Naive thymus-derived CD4-positive, alpha-beta T cell (primary cell): ENCODE measurements at regions of chr1 and their contacts with region 1.

Region 1: GRCh38 chr1:84690397-84691121 is at the start of gene SSX2IP:
- DNase-seq: peak; percentile 97 to 100 (median 99)
- ATAC-seq: peak; percentile 94
- H3K4me3 ChIP-seq: peak within 1 kb of the TSS; percentile 85
- H3K4me3 Mint-ChIP-seq: peak within 1 kb of the TSS; percentile 85 to 99 (median 92)
- H3K27ac ChIP-seq: peak within 1 kb of the TSS; percentile 82
- H3K27ac Mint-ChIP-seq: peak within 1 kb of the TSS; percentile 92 to 98 (median 96)
- H3K4me1 ChIP-seq: peaks cover 3 to 24% of the 10 kb centered on the region in 2 donors
- H3K4me1 Mint-ChIP-seq: peaks cover 29 to 76% (median 60%) of the 10 kb centered on the region in 7 donors
- H3K27me3 ChIP-seq: no peaks in the 10 kb centered on the region
- H3K27me3 Mint-ChIP-seq: no peaks in the 10 kb centered on the region
- total RNA-seq, gene SSX2IP: 7.5 to 13.4 (median 8.1) TPM

Region 2: DNA sequence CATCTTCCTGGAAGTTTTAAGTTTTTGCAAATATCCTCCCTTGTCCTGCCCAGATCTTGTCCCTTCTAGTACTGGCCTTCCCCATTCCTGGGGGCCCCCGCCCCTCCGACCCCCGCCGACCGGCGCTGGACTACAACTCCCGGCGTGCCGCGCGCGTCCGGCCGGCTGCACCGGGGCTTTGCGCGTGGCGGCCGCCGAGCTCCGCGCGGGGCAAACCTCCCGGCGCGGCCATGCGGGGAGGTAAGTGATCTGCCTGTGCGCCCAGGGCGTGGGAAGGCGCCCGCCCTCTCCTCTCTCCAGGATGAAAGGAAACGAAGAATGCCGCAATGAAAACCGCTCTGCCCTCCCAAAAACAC is 392.3 kb before region 1 on chr1:
- CTCF ChIA-PET with region 1: no interaction called
- POLR2A ChIA-PET with region 1: no interaction called
- intact Hi-C with region 1: loop called in 1 of 2 experiments (anchors 2 kb)
- DNase-seq: peak; percentile 40 to 65 (median 46)
- ATAC-seq: peak; percentile 88
- H3K4me3 ChIP-seq: peak overlapping the region; percentile 92
- H3K4me3 Mint-ChIP-seq: peak overlapping the region; percentile 83 to 95 (median 90)
- H3K27ac ChIP-seq: peak overlapping the region; percentile 69
- H3K27ac Mint-ChIP-seq: peak overlapping the region; percentile 67 to 85 (median 79)
- H3K4me1 ChIP-seq: peaks cover 4 to 25% of the 10 kb centered on the region in 2 donors
- H3K4me1 Mint-ChIP-seq: peaks cover 17 to 52% (median 42%) of the 10 kb centered on the region in 7 donors
- H3K27me3 ChIP-seq: no peaks in the 10 kb centered on the region
- H3K27me3 Mint-ChIP-seq: peaks cover 0 to 16% (median 6%) of the 10 kb centered on the region in 5 donors

Region 3: DNA sequence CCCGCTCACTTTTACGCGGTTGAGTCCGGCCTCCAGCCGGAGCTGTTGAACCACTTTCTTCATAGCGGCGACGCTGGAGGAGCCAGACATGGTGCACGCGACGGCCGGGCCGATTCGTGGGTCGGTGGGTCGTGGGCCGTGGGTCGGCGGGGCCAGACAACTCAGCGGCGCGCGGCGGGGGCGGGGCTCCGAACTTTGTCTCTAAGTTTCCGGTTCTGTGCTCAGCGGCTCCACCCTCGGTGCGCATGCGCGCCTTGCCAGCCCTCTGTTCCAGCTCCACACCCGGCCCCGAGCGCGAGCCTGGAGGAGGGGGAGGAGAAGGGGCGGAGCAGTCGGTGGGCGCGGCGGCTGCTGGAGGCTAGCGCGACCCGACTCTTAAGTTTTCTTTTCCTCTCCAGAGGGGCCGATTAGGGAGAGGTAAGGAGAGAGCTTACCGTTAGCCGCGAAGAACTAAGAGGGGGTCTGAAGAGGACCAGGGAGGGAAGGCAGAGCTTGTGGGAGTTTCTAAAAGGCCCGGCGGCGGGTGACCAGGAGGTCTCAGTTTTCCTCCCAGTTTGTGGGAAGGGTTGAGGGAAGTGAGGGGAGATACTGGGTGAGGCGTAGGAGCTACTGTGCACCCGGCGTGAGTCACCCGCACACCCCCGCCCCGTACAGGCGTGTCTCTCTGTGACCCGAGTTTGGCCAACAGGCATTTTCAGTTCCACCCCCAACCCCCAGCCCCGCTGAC is 184.4 kb before region 1 on chr1 and contains the starts of genes GNG5 and SPATA1:
- CTCF ChIA-PET with region 1: no interaction called
- POLR2A ChIA-PET with region 1: no interaction called
- intact Hi-C with region 1: loop called (anchors 1 kb)
- DNase-seq: peak; percentile 94 to 98 (median 96)
- ATAC-seq: peak; percentile 95
- H3K4me3 ChIP-seq: peak within 1 kb of the TSS; percentile 94
- H3K4me3 Mint-ChIP-seq: peak within 1 kb of the TSS; percentile 94 to 100 (median 98)
- H3K27ac ChIP-seq: peak within 1 kb of the TSS; percentile 76
- H3K27ac Mint-ChIP-seq: peak within 1 kb of the TSS; percentile 93 to 99 (median 96)
- H3K4me1 ChIP-seq: peaks cover 15 to 27% of the 10 kb centered on the region in 2 donors
- H3K4me1 Mint-ChIP-seq: peaks cover 18 to 54% (median 50%) of the 10 kb centered on the region in 7 donors
- H3K27me3 ChIP-seq: no peaks in the 10 kb centered on the region
- H3K27me3 Mint-ChIP-seq: peaks cover 0 to 2% (median 0%) of the 10 kb centered on the region in 5 donors
- total RNA-seq, gene GNG5: 24.8 to 90.7 (median 28.9) TPM
- total RNA-seq, gene SPATA1: 1.7 to 3.6 (median 2.2) TPM in 4 of 5 experiments, not detected in the other

Region 4: DNA sequence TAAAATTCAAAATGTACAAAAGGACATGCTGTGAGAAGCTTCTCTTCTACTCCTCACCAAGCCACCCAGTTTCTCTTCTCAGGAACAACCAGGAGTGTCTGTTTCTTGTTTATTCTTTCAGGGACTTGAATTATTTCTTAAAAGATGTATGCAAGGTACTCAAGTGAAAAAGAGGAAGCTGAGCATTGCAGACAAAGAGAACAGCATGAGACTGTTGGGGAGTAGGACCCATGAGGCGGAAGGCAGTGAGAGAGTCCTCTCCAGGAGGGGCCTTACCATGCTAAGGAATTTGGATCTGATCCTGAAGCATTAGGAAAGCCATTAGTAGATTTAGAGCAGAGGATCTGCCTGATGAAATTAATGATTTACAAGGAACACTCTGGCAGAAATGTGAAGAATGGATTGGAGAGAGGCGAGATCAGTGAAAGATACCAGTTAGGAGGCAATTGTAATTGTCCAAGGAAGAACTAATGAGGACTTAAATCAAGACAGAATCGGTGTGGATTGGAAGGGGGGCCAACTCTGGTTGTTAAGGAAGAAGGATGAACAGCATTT is 14.4 kb after region 1 on chr1:
- CTCF ChIA-PET with region 1: interaction called, 3 read pairs
- POLR2A ChIA-PET with region 1: interaction called, 4 read pairs
- intact Hi-C with region 1: loop called in 1 of 2 experiments (anchors 2 kb)
- DNase-seq: no peak
- ATAC-seq: no peak
- H3K4me3 ChIP-seq: no peak overlapping the region
- H3K4me3 Mint-ChIP-seq: no peak overlapping the region
- H3K27ac ChIP-seq: no peak overlapping the region
- H3K27ac Mint-ChIP-seq: no peak overlapping the region
- H3K4me1 ChIP-seq: peaks cover 0 to 4% of the 10 kb centered on the region in 2 donors
- H3K4me1 Mint-ChIP-seq: peaks cover 2 to 16% (median 7%) of the 10 kb centered on the region in 7 donors
- H3K27me3 ChIP-seq: no peaks in the 10 kb centered on the region
- H3K27me3 Mint-ChIP-seq: peaks cover 0 to 17% (median 10%) of the 10 kb centered on the region in 5 donors

Region 5: DNA sequence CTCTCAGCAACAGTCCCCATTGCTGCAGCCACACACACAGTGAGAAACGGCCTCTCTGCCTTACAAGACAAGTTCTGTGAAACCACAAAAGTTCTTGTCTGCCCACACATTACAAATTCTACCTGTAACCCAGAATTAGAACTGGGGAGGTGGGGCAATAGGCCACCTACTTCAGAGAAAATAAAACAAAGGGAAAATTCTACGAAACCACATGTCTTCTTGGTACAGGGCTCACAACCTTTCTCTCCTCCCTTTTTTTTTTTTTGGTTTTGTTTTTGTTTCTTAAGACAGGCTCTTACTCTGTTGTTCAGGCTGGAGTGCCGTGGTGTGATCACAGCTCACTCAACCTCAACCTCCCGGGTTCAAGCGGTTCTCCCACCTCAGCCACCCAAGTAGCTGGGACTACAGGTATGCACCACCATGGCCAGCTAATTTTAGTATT is 172.3 kb after region 1 on chr1:
- CTCF ChIA-PET with region 1: no interaction called
- POLR2A ChIA-PET with region 1: no interaction called
- intact Hi-C with region 1: loop called in 1 of 2 experiments (anchors 5 kb)
- DNase-seq: peak in 8 of 9 donors; percentile 42 to 81 (median 66)
- ATAC-seq: peak; percentile 87
- H3K4me3 ChIP-seq: peak overlapping the region; percentile 44
- H3K4me3 Mint-ChIP-seq: peak overlapping the region; percentile 71 to 89 (median 83)
- H3K27ac ChIP-seq: peak overlapping the region; percentile 67
- H3K27ac Mint-ChIP-seq: peak overlapping the region; percentile 83 to 95 (median 92)
- H3K4me1 ChIP-seq: peaks cover 30 to 46% of the 10 kb centered on the region in 2 donors
- H3K4me1 Mint-ChIP-seq: peaks cover 31 to 69% (median 59%) of the 10 kb centered on the region in 7 donors
- H3K27me3 ChIP-seq: no peaks in the 10 kb centered on the region
- H3K27me3 Mint-ChIP-seq: peaks cover 0 to 6% (median 0%) of the 10 kb centered on the region in 5 donors

Region 6: DNA sequence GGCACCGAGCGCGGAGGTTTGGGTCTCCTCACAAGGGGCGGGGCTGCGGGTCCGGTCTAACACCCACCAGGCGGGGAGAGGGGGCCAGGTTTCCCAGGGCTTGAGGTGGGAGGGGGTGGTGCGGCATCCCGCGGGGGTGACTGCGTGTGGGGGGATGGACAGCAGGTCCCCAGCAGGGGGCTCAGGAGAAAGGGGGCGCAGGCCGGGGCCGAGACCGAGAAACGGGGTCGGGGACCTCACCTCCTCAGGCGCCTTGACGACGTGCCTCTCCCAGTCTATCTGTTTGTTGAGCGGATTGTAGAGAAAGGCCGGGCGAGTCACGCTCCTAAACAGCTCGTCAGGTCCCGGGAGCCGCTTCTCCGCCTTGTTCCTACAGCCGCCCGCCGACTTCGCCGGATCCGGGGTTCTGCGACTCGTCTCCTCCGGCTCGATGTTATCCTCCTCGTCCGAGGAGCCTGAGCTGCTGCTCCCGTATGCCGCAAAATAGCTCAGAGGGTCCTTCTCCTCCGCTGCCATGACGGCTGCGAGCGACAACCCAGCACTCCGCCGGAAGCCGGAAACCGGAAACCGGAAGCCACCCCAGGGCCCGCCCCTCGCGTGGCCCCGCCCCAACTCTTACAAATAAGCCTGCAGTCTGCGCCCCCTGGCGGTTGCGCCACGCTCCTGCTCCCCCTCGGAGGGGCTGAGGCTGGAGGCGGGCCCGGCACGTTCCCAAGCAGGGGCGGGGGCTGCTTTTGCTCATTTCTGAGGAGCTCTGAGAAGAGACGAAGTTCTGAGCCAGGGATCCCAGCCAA is 568.8 kb after region 1 on chr1 and contains the start of gene C1orf52:
- CTCF ChIA-PET with region 1: no interaction called
- POLR2A ChIA-PET with region 1: no interaction called
- intact Hi-C with region 1: loop called (anchors 1 to 2 kb)
- DNase-seq: peak; percentile 92 to 99 (median 96)
- ATAC-seq: peak; percentile 99
- H3K4me3 ChIP-seq: peak within 1 kb of the TSS; percentile 83
- H3K4me3 Mint-ChIP-seq: peak within 1 kb of the TSS; percentile 93 to 99 (median 98)
- H3K27ac ChIP-seq: peak within 1 kb of the TSS; percentile 90
- H3K27ac Mint-ChIP-seq: peak within 1 kb of the TSS; percentile 91 to 98 (median 96)
- H3K4me1 ChIP-seq: peaks cover 14 to 16% of the 10 kb centered on the region in 2 donors
- H3K4me1 Mint-ChIP-seq: peaks cover 19 to 52% (median 45%) of the 10 kb centered on the region in 7 donors
- H3K27me3 ChIP-seq: no peaks in the 10 kb centered on the region
- H3K27me3 Mint-ChIP-seq: no peaks in the 10 kb centered on the region
- total RNA-seq, gene C1orf52: 25.7 to 55.4 (median 46.1) TPM